WTC11 (cell line): ENCODE measurements at regions of chr4 and their contacts with region 1.

Region 1: DNA sequence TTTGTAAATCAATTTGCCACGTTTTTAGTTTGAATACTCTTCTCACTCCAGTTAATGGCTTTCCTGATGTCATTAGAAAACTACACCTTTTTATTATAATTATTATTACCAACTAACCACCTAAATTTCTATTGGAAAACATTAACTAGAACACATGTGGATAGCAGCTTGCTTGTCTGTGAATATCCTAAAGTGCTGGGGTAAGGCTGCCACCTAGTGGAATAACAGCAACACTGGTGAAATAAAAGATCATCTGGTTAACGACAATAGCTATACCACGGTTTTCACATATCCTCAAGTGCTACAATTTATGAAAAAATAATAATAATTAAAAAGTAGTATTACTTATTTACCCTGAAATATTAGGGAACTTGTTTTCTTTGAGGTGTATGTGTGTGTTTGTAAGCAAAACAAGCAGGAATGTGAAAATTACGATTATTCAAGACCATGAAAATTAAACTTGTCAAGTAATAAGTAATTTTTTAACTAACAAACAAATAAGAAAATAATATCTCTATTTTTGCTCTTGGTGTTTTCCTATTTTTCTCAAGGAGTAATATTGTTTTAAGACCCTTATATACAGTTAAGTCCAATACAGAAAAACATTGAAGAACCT is 130.1 kb upstream of the TECRL start:
- DNase-seq: peak; percentile 45
- ATAC-seq: peak; percentile 76
- H3K4me3 Mint-ChIP-seq: no peak overlapping the region
- H3K27ac Mint-ChIP-seq: no peak overlapping the region
- H3K4me1 Mint-ChIP-seq: no peaks in the 10 kb centered on the region
- H3K27me3 Mint-ChIP-seq: no peaks in the 10 kb centered on the region
- CTCF ChIP-seq: peak; percentile 67

Region 2: DNA sequence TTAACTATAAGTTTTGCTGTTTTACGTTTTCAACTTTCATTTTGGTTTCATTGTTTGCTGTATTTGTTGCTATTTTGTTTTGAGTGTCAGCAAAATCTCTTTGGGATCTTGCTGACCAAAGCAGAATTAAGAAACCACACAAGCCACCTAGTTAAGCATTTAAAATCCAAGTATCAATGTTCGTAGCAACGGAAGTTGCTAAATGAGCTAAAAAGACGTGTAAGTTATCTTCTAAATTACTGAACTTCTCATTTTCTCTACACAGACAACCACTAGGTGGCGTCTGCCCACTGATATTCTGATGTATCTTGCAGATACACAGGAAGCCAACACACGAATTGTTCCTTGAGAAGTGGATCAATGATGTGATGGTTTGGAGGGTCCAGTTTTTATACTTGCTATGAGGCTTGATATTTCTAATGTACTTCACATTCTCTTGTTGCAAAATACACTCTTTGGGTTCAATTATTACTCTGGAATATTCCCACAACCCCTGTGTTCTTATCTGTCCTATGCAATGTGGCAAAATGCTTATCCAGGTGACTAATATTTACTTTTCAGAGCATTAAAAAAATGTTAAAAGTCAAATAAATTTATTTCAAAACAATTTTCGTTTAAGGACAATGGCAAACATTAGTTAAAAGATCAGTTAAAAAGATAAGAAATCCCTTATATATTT is 380.6 kb before region 1 on chr4:
- CTCF ChIA-PET with region 1: interaction called, 15 read pairs
- POLR2A ChIA-PET with region 1: no interaction called
- DNase-seq: peak; percentile 67
- ATAC-seq: peak; percentile 56; the same call in 1 of the 2 replicates
- H3K4me3 Mint-ChIP-seq: no peak overlapping the region
- H3K27ac Mint-ChIP-seq: no peak overlapping the region
- H3K4me1 Mint-ChIP-seq: 0 out of 2 replicates have a peak, but pooled peaks cover 3% of the 10 kb centered on the region
- H3K27me3 Mint-ChIP-seq: no peaks in the 10 kb centered on the region
- CTCF ChIP-seq: peak; percentile 61

Region 3: GRCh38 chr4:64503945-64504697 is 35.2 kb before region 1 on chr4:
- CTCF ChIA-PET with region 1: no interaction called
- POLR2A ChIA-PET with region 1: no interaction called
- DNase-seq: no peak
- ATAC-seq: no peak
- H3K4me3 Mint-ChIP-seq: no peak overlapping the region
- H3K27ac Mint-ChIP-seq: no peak overlapping the region
- H3K4me1 Mint-ChIP-seq: no peaks in the 10 kb centered on the region
- H3K27me3 Mint-ChIP-seq: no peaks in the 10 kb centered on the region
- CTCF ChIP-seq: no peak